HepG2 (cell line): ENCODE measurements at regions of chr2 and their contacts with region 1.

Region 1: DNA sequence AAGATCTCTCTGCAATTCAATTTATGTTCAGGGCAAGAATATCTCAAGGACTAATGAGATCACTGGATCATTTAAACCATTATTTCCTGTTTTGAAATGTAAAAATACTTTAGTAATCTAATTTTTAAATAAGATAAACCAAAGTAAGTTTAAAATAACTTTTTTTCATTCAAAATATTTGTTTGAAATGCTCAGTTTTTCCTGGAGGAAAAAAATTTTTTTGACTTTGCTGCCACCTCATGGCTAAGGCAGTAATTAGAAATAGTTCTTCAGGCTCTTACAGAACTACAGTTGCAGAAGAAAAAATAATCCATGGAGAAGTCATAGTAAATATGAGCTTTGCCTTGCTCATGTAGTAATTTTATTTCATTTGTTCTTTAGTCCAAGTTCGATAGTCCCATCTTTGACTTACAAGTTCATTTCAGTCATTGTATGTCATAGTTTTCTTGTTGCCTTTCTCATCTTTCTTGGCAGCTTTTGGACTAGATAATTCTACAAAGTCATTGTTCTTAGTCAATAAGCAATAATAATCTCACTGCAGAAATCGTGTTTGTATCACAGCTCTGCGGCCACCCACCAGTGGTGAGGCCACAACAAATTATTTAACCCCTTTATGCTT is 127.4 kb downstream of the DPP4 start:
- DNase-seq: peak; percentile 18
- ATAC-seq: peak; percentile 57; the same call in 1 of the 3 replicates
- H3K4me3 ChIP-seq: no peak overlapping the region
- H3K27ac ChIP-seq: no peak overlapping the region
- H3K4me1 ChIP-seq: peaks cover 5% of the 10 kb centered on the region; the same call in 1 of the 2 replicates
- H3K27me3 ChIP-seq: no peaks in the 10 kb centered on the region
- CTCF ChIP-seq: peak; percentile 57
- EP300 ChIP-seq: no peak
- POLR2A ChIP-seq: no peak
- RAD21 ChIP-seq: no peak

Region 2: DNA sequence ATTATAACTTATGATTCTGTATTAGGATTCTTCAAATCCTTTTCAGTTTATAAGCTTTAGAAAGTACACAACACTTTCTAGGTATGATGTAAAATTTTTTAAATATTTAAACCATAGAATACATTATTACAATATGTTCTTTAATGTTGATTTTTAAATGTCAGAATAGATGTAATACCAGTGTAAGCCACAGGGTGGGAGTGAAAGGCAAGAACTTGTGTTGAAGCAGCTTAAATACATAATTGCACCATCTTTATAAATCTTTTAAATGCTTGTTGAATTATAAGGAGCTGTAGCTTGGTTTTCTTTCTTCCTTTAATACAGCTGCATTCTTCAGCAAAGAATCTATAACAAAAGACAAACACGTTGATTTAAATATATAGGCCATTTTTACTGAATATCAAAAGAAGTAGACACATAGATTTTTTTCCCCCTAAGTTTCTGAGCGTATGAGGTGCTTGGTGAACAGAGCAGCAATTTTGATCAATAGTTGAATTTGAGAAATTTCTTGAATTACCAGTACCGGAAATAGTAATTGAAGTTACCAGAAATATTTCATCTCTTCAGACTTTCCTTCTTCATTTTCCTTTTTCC is 723.4 kb before region 1 on chr2:
- CTCF ChIA-PET with region 1: no interaction called
- POLR2A ChIA-PET with region 1: no interaction called
- in situ Hi-C with region 1: no loop called
- intact Hi-C with region 1: loop called (anchors 1 kb)
- DNase-seq: peak; percentile 51
- ATAC-seq: peak; percentile 69
- H3K4me3 ChIP-seq: no peak overlapping the region
- H3K27ac ChIP-seq: no peak overlapping the region
- H3K4me1 ChIP-seq: no peaks in the 10 kb centered on the region
- H3K27me3 ChIP-seq: no peaks in the 10 kb centered on the region
- CTCF ChIP-seq: peak; percentile 61
- EP300 ChIP-seq: no peak
- POLR2A ChIP-seq: no peak
- RAD21 ChIP-seq: peak; percentile 37; the same call in 1 of the 2 replicates

Region 3: DNA sequence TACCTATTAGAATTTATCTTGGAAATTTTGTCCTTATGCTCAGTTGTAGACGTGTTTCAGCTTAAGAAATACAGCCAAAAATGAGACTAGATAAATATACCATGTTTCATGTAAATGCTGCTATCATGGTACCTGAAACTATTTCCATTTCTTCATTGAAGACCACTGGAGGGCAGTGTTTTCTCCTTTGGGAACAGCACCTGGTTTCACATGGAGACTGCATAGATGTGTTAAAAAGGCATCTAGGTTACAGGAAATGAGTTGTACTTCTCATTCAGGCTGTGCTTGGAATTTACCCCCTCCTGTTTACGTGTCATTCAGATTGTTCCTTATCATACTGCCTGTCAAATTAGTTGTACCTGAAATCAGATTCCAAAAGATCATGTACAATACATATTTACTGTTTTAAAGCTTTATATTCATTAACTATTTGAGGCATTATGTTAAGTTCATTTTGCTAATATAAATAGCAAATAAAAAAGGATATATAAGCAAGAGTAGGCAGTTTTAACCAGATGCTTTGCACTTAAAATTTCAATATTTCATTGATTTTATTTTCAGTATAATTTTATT is 695.6 kb before region 1 on chr2:
- CTCF ChIA-PET with region 1: interaction called, 5 read pairs
- POLR2A ChIA-PET with region 1: no interaction called
- in situ Hi-C with region 1: loop called (anchors 25 kb)
- intact Hi-C with region 1: loop called (anchors 10 kb)
- DNase-seq: peak; percentile 74
- ATAC-seq: peak; percentile 97
- H3K4me3 ChIP-seq: no peak overlapping the region
- H3K27ac ChIP-seq: no peak overlapping the region
- H3K4me1 ChIP-seq: no peaks in the 10 kb centered on the region
- H3K27me3 ChIP-seq: peaks cover 0 to 2% of the 10 kb centered on the region in 2 experiments; a peak in 2 of 5 replicates
- CTCF ChIP-seq: peak; percentile 89
- EP300 ChIP-seq: no peak
- POLR2A ChIP-seq: no peak
- RAD21 ChIP-seq: peak; percentile 51

Region 4: DNA sequence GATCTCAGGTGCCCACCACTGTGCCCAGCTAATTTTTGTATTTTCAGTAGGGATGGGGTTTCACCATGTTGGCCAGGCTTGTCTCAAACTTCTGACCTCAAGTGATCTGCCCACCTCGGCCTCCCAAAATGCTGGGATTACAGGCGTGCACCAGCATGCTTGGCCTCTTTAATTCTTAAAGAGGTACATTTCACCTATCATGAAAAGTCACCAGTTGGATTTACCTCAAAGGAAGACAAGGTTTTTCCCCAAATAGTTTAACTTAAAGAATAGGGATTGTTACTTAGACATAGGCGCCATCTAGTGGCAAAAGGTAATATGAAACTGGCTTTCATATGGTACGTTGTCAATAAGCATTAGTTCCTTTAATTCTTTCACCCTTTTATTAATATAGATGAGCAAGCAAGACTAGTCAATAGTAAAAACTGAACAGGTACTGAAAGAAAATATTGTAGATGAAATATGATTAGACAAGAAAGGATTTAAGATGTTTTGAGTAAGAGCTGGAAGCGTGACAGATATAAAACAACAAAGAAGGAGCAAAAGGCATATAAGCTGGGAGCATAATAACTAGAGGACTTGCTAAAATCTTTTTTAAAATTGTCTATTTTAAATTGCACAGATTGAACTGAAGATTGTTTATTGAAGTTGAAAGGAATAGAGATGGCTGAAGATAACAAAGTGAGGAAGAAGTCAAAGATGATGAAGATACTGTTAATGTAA is 673.4 kb before region 1 on chr2:
- CTCF ChIA-PET with region 1: no interaction called
- POLR2A ChIA-PET with region 1: no interaction called
- in situ Hi-C with region 1: loop called (anchors 25 kb)
- intact Hi-C with region 1: no loop called
- DNase-seq: peak; percentile 64
- ATAC-seq: peak; percentile 80
- H3K4me3 ChIP-seq: no peak overlapping the region
- H3K27ac ChIP-seq: no peak overlapping the region
- H3K4me1 ChIP-seq: no peaks in the 10 kb centered on the region
- H3K27me3 ChIP-seq: peaks cover 2 to 4% of the 10 kb centered on the region in 2 experiments; a peak in 2 of 5 replicates
- CTCF ChIP-seq: peak; percentile 81
- EP300 ChIP-seq: no peak
- POLR2A ChIP-seq: no peak
- RAD21 ChIP-seq: peak; percentile 67; the same call in 1 of the 2 replicates

Region 5: GRCh38 chr2:161283926-161284325 is 662.7 kb before region 1 on chr2:
- CTCF ChIA-PET with region 1: no interaction called
- POLR2A ChIA-PET with region 1: no interaction called
- in situ Hi-C with region 1: no loop called
- intact Hi-C with region 1: loop called (anchors 10 kb)
- DNase-seq: no peak
- ATAC-seq: no peak
- H3K4me3 ChIP-seq: no peak overlapping the region
- H3K27ac ChIP-seq: no peak overlapping the region
- H3K4me1 ChIP-seq: peaks cover 8% of the 10 kb centered on the region; the same call in 1 of the 2 replicates
- H3K27me3 ChIP-seq: no peaks in the 10 kb centered on the region
- CTCF ChIP-seq: no peak
- EP300 ChIP-seq: no peak
- POLR2A ChIP-seq: no peak
- RAD21 ChIP-seq: no peak

Region 6: DNA sequence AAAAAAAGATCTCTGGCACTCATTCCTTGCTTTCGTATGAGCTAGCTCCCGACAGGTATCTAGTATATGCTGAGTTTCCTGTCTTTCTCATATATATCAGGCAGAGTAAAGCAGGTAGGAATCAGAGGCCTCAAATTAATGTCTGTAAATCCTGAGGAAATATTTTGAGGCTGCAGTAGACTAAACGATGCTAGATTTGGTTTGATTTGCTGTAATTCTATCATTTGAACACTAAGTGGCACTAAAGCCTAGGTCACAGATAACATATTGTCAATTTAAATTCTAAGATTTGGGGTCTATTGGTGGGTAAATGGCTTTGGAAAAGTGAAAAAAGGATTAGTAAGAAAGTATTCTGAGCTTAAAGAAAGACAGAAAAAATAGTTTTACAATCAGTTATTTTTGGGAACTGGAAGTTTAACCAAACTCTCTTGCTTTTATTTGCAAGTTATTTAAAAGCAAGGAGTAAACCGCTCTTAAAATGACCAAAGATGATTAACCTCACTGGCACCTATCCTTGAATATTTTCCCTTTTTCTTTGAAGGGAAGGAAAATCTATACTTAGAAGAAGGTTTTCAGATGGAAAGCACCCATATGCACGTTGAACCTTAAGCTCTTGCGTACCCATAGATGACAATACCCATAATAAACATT is 360.0 kb before region 1 on chr2:
- CTCF ChIA-PET with region 1: interaction called, 25 read pairs
- POLR2A ChIA-PET with region 1: no interaction called
- in situ Hi-C with region 1: loop called (anchors 5 kb)
- intact Hi-C with region 1: loop called (anchors 1 kb)
- DNase-seq: peak; percentile 22
- ATAC-seq: peak; percentile 66
- H3K4me3 ChIP-seq: no peak overlapping the region
- H3K27ac ChIP-seq: no peak overlapping the region
- H3K4me1 ChIP-seq: no peaks in the 10 kb centered on the region
- H3K27me3 ChIP-seq: no peaks in the 10 kb centered on the region
- CTCF ChIP-seq: peak; percentile 69
- EP300 ChIP-seq: no peak
- POLR2A ChIP-seq: no peak
- RAD21 ChIP-seq: peak; percentile 60

Region 7: DNA sequence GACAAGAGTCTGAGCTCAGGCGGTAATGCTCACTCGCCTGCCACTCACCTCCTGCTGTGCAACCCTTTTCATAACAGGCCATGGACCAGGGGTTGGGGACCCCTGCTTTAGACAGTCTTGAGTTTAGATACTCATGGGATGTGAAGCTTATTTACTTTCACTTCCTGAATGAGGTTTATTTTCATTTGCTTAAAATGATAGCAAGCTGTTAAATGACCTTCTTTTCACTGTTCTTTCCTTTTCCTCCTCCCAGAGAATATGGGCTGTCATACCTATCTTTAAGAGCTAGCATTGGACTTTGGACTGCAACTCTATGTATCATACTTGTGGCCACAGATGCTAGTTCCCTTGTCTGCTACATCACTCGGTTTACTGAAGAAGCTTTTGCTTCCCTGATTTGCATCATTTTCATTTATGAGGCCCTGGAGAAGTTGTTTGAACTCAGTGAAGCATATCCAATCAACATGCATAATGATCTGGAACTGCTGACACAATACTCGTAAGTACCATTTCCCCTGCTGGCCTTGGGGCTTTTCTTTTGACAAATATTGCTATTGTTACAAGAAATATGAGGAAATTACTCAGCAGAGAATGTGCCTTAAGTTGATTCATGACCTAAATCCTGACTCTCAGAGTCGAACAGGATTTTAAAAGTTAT is 41.1 kb before region 1 on chr2:
- CTCF ChIA-PET with region 1: no interaction called
- POLR2A ChIA-PET with region 1: no interaction called
- in situ Hi-C with region 1: no loop called
- intact Hi-C with region 1: no loop called
- DNase-seq: peak; percentile 11
- ATAC-seq: no peak
- H3K4me3 ChIP-seq: no peak overlapping the region
- H3K27ac ChIP-seq: no peak overlapping the region
- H3K4me1 ChIP-seq: no peaks in the 10 kb centered on the region
- H3K27me3 ChIP-seq: no peaks in the 10 kb centered on the region
- CTCF ChIP-seq: no peak
- EP300 ChIP-seq: no peak
- POLR2A ChIP-seq: no peak
- RAD21 ChIP-seq: no peak

Region 8: DNA sequence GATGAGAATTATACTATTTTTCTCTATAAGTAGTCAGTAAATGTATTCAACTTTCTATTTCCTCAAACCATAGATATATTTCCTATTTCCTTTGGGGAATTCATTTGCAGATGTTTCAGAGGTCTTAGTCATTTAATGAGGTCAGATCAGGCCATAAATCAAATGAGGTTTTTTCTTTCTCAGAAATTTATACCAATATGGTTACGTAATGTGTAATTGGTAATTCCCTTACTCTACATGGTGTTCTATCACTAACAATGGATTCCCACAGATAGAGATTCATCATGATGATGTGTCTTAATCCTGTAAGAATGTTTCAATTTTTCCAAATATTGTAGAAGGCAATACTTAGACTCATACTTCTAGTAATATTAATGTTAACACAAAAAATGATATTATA is 19.4 kb after region 1 on chr2:
- CTCF ChIA-PET with region 1: no interaction called
- POLR2A ChIA-PET with region 1: no interaction called
- in situ Hi-C with region 1: no loop called
- intact Hi-C with region 1: no loop called
- DNase-seq: no peak
- ATAC-seq: no peak
- H3K4me3 ChIP-seq: no peak overlapping the region
- H3K27ac ChIP-seq: no peak overlapping the region
- H3K4me1 ChIP-seq: no peaks in the 10 kb centered on the region
- H3K27me3 ChIP-seq: no peaks in the 10 kb centered on the region
- CTCF ChIP-seq: no peak
- EP300 ChIP-seq: no peak
- POLR2A ChIP-seq: no peak
- RAD21 ChIP-seq: no peak

Region 9: DNA sequence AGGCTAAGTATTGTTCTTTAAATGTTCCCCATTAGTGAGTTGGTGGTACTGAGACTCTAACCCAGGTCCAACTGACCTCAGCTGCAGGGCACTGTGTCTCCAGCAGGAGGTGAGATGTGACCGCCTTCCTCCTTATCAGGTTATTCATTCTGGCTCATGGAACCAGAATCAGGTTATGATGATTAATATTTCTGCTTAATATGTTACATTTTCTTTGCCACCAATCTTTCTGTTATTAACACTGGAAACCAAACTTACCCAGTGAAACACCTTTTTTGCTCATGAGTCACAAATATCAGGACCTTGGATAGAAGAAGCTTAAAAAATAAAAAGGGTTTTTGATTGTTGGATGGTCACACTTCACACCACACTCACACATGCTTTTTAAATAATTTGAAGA is 42.0 kb after region 1 on chr2:
- CTCF ChIA-PET with region 1: no interaction called
- POLR2A ChIA-PET with region 1: no interaction called
- in situ Hi-C with region 1: no loop called
- intact Hi-C with region 1: no loop called
- DNase-seq: no peak
- ATAC-seq: peak; percentile 90
- H3K4me3 ChIP-seq: no peak overlapping the region
- H3K27ac ChIP-seq: no peak overlapping the region
- H3K4me1 ChIP-seq: no peaks in the 10 kb centered on the region
- H3K27me3 ChIP-seq: no peaks in the 10 kb centered on the region; a peak in 1 of 5 replicates
- CTCF ChIP-seq: peak; percentile 57
- EP300 ChIP-seq: no peak
- POLR2A ChIP-seq: no peak
- RAD21 ChIP-seq: peak; percentile 30; the same call in 1 of the 2 replicates

Region 10: GRCh38 chr2:162123806-162124758 is 177.5 kb after region 1 on chr2:
- CTCF ChIA-PET with region 1: no interaction called
- POLR2A ChIA-PET with region 1: no interaction called
- in situ Hi-C with region 1: no loop called
- intact Hi-C with region 1: loop called (anchors 5 kb)
- DNase-seq: peak; percentile 69
- ATAC-seq: peak; percentile 70
- H3K4me3 ChIP-seq: no peak overlapping the region
- H3K27ac ChIP-seq: no peak overlapping the region
- H3K4me1 ChIP-seq: peaks cover 11% of the 10 kb centered on the region
- H3K27me3 ChIP-seq: no peaks in the 10 kb centered on the region; a peak in 1 of 5 replicates
- CTCF ChIP-seq: peak; percentile 76
- EP300 ChIP-seq: no peak
- POLR2A ChIP-seq: no peak
- RAD21 ChIP-seq: peak; percentile 80